RWPE1 (cell line): ENCODE measurements at regions of chr17 and their contacts with region 1.

Region 1: GRCh38 chr17:27454089-27454488 is 2.2 kb upstream of the KSR1 start:
- DNase-seq: no peak
- H3K27ac ChIP-seq: no peak overlapping the region
- CTCF ChIP-seq: no peak

Region 2: GRCh38 chr17:27407916-27408846 is 45.9 kb before region 1 on chr17:
- CTCF ChIA-PET with region 1: interaction called, 3 read pairs
- POLR2A ChIA-PET with region 1: interaction called, 10 read pairs
- DNase-seq: peak; percentile 73
- H3K27ac ChIP-seq: peak overlapping the region; percentile 30; the same call in 1 of the 2 replicates
- CTCF ChIP-seq: no peak